ENCODE measurements at regions of chr1 and their contacts with region 1.

Region 1: DNA sequence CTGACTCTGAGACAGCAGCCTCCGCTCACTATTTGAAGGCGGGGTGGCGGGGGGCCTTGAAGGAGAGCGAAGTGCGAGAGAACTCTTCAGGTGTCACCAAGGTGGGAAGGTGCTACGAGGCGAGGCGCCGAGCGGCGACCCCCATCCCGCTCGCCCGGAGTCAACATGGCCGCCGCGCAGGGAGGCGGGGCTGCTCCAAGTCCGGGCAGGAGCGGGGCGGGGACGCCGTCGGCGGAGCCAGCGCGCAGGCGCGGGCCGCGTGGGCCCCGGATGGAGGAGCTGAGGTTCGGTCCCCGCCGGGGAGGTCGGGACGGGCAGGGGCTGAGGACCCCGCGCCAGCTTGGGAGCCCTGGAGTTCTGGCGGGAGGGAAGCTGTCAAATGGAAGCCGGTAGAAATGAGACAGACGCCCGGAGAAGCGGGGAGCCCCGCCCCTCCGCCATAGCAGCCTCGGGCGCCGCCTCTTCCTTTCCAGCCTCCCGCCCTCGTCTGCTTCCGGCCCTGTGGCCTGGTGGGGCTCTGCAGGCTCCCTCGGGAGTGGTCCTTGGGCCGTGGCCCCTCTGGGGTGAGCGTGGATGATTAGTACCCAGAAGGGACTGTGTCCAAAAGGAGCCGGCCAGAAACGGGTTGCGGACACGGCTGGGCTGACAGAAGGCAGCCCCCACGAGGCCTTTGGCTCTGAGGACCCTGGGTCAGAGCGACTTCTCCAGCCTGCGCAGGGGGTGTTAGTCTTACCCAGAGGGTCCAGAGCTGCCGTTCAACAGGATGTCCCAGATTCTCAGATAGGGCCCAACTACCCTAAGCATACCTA is at the start of gene PIGV:
- DNase-seq: peak; percentile 80 to 96 (median 87)
- ATAC-seq: peak; percentile 68
- H3K4me3 ChIP-seq: peak within 1 kb of the TSS; percentile 91 to 95
- H3K4me3 Mint-ChIP-seq: peak within 1 kb of the TSS; percentile 99
- H3K27ac ChIP-seq: peak within 1 kb of the TSS; percentile 81 to 97
- H3K27ac Mint-ChIP-seq: peak within 1 kb of the TSS; percentile 100
- H3K4me1 ChIP-seq: peaks cover 52% of the 10 kb centered on the region
- H3K4me1 Mint-ChIP-seq: peaks cover 78% of the 10 kb centered on the region
- H3K27me3 ChIP-seq: no peaks in the 10 kb centered on the region
- H3K27me3 Mint-ChIP-seq: no peaks in the 10 kb centered on the region
- CTCF ChIP-seq: no peak
- total RNA-seq, gene PIGV: 9.5 to 12.7 TPM

Region 2: DNA sequence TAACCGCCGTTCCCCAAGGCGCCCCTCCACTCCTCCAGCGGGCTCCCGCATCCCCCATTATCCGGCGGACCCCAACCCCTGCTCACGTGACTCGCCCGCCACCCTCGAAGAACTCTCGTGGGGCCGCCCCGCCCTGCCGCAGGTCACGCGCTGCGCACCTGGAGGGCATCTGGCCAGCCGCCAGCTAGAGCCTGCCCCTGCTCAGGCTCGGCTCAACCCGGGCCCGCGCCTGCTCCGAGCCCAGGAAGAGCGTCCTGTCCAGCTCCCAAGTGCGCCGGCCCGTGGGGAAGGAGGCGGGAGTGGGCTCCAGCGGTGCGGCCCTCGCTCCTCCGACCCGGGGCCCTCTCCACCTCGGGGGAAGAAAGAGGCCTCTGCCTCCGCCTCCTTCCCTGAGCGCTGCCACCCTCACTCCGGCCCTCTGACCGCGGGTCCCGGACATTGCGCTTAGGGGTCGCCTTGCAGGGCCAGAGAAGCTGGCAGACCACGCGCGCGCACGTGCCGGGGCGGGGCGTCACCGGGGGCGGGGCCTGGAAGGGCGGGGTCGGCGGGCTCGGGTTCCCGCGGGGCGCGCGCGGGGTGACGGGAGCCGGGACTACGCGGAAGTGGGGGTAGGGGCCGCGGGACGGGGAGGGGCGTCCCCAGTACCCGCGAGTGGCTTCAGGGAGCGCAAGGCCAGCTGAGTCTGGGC is 287.3 kb before region 1 on chr1:
- CTCF ChIA-PET with region 1: interaction called, 14 read pairs
- POLR2A ChIA-PET with region 1: interaction called, 9 read pairs
- intact Hi-C with region 1: loop called (anchors 1 kb)
- DNase-seq: peak; percentile 74 to 95 (median 89)
- ATAC-seq: peak; percentile 75
- H3K4me3 ChIP-seq: peak overlapping the region; percentile 67 to 96
- H3K4me3 Mint-ChIP-seq: peak overlapping the region; percentile 84
- H3K27ac ChIP-seq: peak overlapping the region; percentile 84 to 89
- H3K27ac Mint-ChIP-seq: peak overlapping the region; percentile 89
- H3K4me1 ChIP-seq: peaks cover 13% of the 10 kb centered on the region
- H3K4me1 Mint-ChIP-seq: peaks cover 15% of the 10 kb centered on the region
- H3K27me3 ChIP-seq: no peaks in the 10 kb centered on the region
- H3K27me3 Mint-ChIP-seq: no peaks in the 10 kb centered on the region
- CTCF ChIP-seq: peak; percentile 15

Region 3: GRCh38 chr1:26602378-26602959 is 185.4 kb before region 1 on chr1:
- CTCF ChIA-PET with region 1: interaction called, 439 read pairs
- POLR2A ChIA-PET with region 1: interaction called, 46 read pairs
- intact Hi-C with region 1: loop called (anchors 1 kb)
- DNase-seq: peak in 5 of 9 experiments; percentile 16 to 81 (median 49)
- ATAC-seq: peak; percentile 67
- H3K4me3 ChIP-seq: no peak overlapping the region
- H3K4me3 Mint-ChIP-seq: no peak overlapping the region
- H3K27ac ChIP-seq: no peak overlapping the region
- H3K27ac Mint-ChIP-seq: no peak overlapping the region
- H3K4me1 ChIP-seq: peaks cover 5% of the 10 kb centered on the region
- H3K4me1 Mint-ChIP-seq: peaks cover 8% of the 10 kb centered on the region
- H3K27me3 ChIP-seq: no peaks in the 10 kb centered on the region
- H3K27me3 Mint-ChIP-seq: no peaks in the 10 kb centered on the region
- CTCF ChIP-seq: peak; percentile 98

Region 4: DNA sequence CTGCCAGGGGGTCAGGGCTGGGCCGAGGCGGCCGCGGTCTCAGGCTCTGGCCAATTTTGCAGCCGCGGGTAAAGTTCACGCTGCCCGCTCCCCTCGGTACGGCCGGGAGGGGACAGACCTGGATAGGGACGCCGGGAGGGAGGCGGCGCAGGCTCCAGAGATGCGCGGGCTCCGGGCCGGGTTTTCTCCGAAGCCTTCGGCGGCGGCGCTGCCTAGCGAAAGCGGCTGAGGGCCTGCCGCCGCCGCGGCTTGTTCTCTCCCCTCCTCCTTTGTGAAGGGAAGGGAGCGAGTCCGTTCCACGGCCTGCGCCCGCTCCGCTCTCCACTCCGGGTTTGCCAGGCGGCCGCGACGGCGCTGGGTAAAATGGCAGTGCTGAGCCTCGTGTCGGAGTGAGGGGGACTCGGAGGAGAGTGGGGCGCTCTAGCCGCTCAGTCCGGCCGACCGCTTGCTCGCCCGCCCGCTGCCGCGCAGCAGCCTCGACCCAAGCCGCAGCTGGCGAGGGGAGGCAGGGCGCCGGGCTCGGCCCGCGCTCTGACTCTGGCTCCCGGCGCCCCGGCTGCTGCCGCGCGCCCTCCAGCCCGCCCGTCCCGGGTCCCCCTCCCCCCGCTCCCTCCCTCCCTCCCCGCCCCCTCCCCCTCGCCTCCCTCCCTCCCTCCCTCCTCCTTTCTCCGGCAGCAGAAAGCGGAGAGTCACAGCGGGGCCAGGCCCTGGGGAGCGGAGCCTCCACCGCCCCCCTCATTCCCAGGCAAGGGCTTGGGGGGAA is 92.4 kb before region 1 on chr1 and contains the start of gene ARID1A:
- CTCF ChIA-PET with region 1: interaction called, 126 read pairs
- POLR2A ChIA-PET with region 1: interaction called, 224 read pairs
- intact Hi-C with region 1: loop called (anchors 1 kb)
- DNase-seq: peak; percentile 92 to 98 (median 95)
- ATAC-seq: peak; percentile 59
- H3K4me3 ChIP-seq: peak within 1 kb of the TSS; percentile 74 to 86
- H3K4me3 Mint-ChIP-seq: peak within 1 kb of the TSS; percentile 93
- H3K27ac ChIP-seq: peak within 1 kb of the TSS; percentile 44 to 72
- H3K27ac Mint-ChIP-seq: peak within 1 kb of the TSS; percentile 94
- H3K4me1 ChIP-seq: peaks cover 51% of the 10 kb centered on the region
- H3K4me1 Mint-ChIP-seq: peaks cover 35% of the 10 kb centered on the region
- H3K27me3 ChIP-seq: no peaks in the 10 kb centered on the region
- H3K27me3 Mint-ChIP-seq: no peaks in the 10 kb centered on the region
- CTCF ChIP-seq: no peak
- total RNA-seq, gene ARID1A: 104 to 105 TPM

Region 5: DNA sequence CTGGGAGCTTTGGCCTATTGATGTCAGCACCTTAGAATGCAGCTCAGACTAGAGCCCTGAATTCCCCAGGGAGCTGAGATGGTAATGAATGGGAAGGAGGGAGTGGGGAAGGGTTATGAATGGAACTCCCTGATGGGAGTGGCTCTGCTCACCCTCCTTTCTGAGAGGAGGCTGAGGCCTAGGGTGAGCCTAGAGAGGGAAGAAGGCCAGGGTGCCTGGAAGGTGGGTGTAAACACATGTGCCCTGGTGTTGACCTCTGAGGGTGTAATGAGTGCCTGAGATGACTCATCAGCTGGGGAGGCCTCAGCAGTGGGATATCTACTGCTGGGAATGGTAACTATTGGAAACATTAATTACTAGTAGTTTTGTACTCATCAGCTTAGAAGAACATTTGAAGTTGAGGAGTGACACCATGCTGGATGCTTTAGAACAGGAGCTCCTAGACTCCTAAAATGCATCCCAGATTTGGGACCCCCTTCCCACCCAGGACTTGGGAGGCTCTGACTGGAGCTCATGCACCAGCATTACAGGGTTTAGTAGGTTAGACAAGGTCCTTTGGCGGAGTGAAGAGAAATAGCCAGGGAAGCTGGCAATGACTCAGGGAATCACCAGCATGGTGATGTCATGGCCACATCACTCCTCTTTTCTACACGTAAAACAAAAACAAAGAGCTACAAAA is 16.1 kb before region 1 on chr1:
- CTCF ChIA-PET with region 1: interaction called, 30 read pairs
- POLR2A ChIA-PET with region 1: interaction called, 4 read pairs
- intact Hi-C with region 1: no loop called
- DNase-seq: no peak
- ATAC-seq: no peak
- H3K4me3 ChIP-seq: no peak overlapping the region
- H3K4me3 Mint-ChIP-seq: no peak overlapping the region
- H3K27ac ChIP-seq: no peak overlapping the region
- H3K27ac Mint-ChIP-seq: peak overlapping the region; percentile 62
- H3K4me1 ChIP-seq: no peaks in the 10 kb centered on the region
- H3K4me1 Mint-ChIP-seq: peaks cover 9% of the 10 kb centered on the region
- H3K27me3 ChIP-seq: no peaks in the 10 kb centered on the region
- H3K27me3 Mint-ChIP-seq: no peaks in the 10 kb centered on the region
- CTCF ChIP-seq: no peak

Region 6: DNA sequence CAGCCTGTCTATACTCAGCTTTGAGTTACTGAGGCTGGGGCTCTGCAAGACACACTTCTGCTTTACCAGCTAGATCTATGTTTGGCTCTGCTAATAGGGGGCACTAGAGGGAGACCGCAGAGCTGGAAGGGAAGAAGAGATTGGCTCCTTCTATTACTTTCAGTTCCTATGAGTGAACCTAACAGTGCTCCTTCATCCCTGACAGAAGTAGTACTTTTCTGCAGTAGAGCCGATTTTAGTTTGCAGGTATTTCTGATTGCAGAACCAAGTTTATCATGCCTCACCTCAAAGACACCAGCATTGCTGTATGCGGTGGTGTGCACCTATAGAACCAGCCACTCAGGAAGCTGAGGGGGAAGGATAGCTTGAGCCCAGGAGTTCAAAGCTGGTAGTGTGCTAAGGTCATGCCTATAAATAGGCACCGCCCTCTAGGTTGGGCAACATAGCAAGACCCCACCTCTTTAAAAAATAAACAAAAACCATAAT is 32.9 kb after region 1 on chr1:
- CTCF ChIA-PET with region 1: interaction called, 15 read pairs
- POLR2A ChIA-PET with region 1: interaction called, 3 read pairs
- intact Hi-C with region 1: no loop called
- DNase-seq: peak in 6 of 9 experiments; percentile 11 to 81 (median 53)
- ATAC-seq: peak; percentile 97
- H3K4me3 ChIP-seq: peak overlapping the region; percentile 23 to 25
- H3K4me3 Mint-ChIP-seq: peak overlapping the region; percentile 82
- H3K27ac ChIP-seq: peak overlapping the region in 1 of 2 experiments; percentile 60
- H3K27ac Mint-ChIP-seq: peak overlapping the region; percentile 89
- H3K4me1 ChIP-seq: peaks cover 21% of the 10 kb centered on the region
- H3K4me1 Mint-ChIP-seq: peaks cover 27% of the 10 kb centered on the region
- H3K27me3 ChIP-seq: no peaks in the 10 kb centered on the region
- H3K27me3 Mint-ChIP-seq: no peaks in the 10 kb centered on the region
- CTCF ChIP-seq: peak; percentile 57

Region 7: DNA sequence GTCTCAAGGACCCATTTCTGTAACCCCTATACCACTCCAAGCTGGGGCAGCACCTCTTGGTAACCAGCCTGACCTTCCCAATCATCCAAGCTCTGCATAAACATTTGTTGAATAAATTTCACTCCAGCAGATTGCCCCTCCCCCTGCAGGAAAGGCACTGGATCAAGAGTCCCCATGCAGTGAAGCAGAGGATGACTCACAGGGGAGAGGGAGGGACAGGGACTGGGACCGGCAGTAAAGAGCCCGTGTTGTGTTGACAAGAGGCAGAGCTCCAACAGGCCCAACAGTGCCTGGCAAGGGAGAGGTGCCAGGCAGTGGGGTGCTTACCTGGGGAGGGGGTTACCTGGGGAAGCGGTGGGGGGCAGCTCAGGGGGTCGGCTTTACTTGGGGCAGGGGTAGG is 334.7 kb after region 1 on chr1:
- CTCF ChIA-PET with region 1: no interaction called
- POLR2A ChIA-PET with region 1: no interaction called
- intact Hi-C with region 1: no loop called
- DNase-seq: no peak
- ATAC-seq: no peak
- H3K4me3 ChIP-seq: no peak overlapping the region
- H3K4me3 Mint-ChIP-seq: no peak overlapping the region
- H3K27ac ChIP-seq: no peak overlapping the region
- H3K27ac Mint-ChIP-seq: no peak overlapping the region
- H3K4me1 ChIP-seq: no peaks in the 10 kb centered on the region
- H3K4me1 Mint-ChIP-seq: peaks cover 9% of the 10 kb centered on the region
- H3K27me3 ChIP-seq: no peaks in the 10 kb centered on the region
- H3K27me3 Mint-ChIP-seq: no peaks in the 10 kb centered on the region
- CTCF ChIP-seq: no peak